T-cell (primary cell): ENCODE measurements at regions of chr2 and their contacts with region 1.

Region 1: GRCh38 chr2:200471324-200471848 is 38.5 kb downstream of the KCTD18 start:
- DNase-seq: peak in 19 of 35 experiments; percentile 8 to 67 (median 21)
- ATAC-seq: no peak
- H3K4me3 ChIP-seq: no peak overlapping the region
- H3K4me3 Mint-ChIP-seq: peak overlapping the region in 1 of 3 donors; percentile 3
- H3K27ac ChIP-seq: no peak overlapping the region
- H3K27ac Mint-ChIP-seq: peak overlapping the region in 1 of 2 donors; percentile 76
- H3K4me1 ChIP-seq: peaks cover 18 to 19% of the 10 kb centered on the region in 2 experiments
- H3K4me1 Mint-ChIP-seq: peaks cover 38 to 39% (median 38%) of the 10 kb centered on the region in 3 donors
- H3K27me3 ChIP-seq: no peaks in the 10 kb centered on the region
- H3K27me3 Mint-ChIP-seq: no peaks in the 10 kb centered on the region

Region 2: DNA sequence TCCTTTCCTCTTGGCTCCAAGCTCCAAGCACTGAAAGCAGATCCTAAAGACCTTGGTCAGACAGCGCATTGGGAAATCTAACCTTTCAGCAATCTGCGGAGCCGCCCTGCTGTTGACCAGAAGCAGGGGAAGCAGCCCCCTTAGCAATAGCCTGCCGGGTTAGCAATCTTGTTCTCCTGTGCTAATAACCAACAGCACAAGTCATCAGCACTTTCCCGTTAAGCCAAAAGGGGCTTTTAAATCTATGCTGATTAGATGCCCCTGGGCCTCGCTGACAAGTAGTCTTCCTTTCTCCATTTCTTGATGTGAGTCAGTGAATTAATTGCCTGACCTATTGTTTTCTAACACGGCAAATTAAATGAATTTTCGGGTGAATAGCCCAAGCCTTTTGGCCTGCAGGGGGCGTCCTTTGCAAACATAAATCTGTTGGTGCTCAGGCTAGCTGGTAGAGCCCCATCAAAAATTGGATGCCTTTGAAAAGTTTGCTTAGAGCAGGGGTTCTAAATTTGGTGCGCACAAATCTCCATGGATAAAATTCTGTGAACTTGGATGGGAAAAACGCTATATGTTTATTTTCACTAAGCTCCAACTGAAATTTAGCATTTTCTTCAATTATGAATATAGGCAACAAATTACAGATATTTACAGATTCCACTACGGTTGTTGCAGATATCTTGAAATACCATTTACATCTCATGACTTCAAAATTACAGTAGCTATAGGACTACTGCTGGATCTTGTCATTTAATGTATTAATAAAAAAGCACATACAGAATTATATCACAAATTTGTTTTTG is 491.4 kb before region 1 on chr2:
- CTCF ChIA-PET with region 1: interaction called, 11 to 12 read pairs
- POLR2A ChIA-PET with region 1: interaction called, 3 read pairs
- DNase-seq: peak; percentile 38 to 85 (median 76)
- ATAC-seq: peak; percentile 42 to 76 (median 60)
- H3K4me3 ChIP-seq: no peak overlapping the region
- H3K4me3 Mint-ChIP-seq: no peak overlapping the region
- H3K27ac ChIP-seq: no peak overlapping the region
- H3K27ac Mint-ChIP-seq: no peak overlapping the region
- H3K4me1 ChIP-seq: peaks cover 0 to 4% of the 10 kb centered on the region in 2 experiments
- H3K4me1 Mint-ChIP-seq: peaks cover 0 to 5% (median 4%) of the 10 kb centered on the region in 3 donors
- H3K27me3 ChIP-seq: peaks cover 0 to 5% of the 10 kb centered on the region in 2 experiments
- H3K27me3 Mint-ChIP-seq: no peaks in the 10 kb centered on the region

Region 3: DNA sequence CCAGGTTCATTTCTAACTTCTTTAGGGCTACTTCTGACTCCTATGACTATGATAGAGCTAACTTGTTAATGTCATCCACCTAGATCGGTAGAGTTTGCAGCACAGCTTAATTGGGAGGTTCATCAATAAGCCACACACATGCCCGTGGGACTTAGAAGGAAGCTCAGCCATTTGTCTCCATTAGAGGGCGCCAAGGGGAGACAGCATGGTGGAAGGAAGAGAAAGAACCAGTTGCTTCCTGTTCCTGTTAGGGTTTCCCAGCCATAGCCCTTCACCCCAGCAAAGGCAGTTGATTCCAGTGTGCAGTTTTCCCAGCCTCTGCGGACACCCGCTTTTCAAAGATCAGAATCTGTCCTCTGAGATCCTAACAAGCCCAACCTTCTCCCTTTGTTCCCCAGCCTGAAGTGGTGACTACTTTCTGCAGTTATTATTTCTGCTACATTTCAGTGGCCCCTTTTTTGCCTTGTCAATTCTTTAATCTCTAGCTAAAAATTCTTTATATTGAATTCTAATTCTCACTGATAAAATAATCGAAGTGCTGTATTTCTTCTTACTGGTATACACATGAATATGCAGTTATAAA is 485.7 kb before region 1 on chr2:
- CTCF ChIA-PET with region 1: interaction called, 11 to 12 read pairs
- POLR2A ChIA-PET with region 1: interaction called in 1 of 2 experiments, 3 read pairs
- DNase-seq: peak in 34 of 35 experiments; percentile 3 to 66 (median 33)
- ATAC-seq: peak in 3 of 4 experiments; percentile 59 to 65 (median 65)
- H3K4me3 ChIP-seq: no peak overlapping the region
- H3K4me3 Mint-ChIP-seq: no peak overlapping the region
- H3K27ac ChIP-seq: no peak overlapping the region
- H3K27ac Mint-ChIP-seq: no peak overlapping the region
- H3K4me1 ChIP-seq: peaks cover 3 to 13% of the 10 kb centered on the region in 2 experiments
- H3K4me1 Mint-ChIP-seq: peaks cover 0 to 6% (median 6%) of the 10 kb centered on the region in 3 donors
- H3K27me3 ChIP-seq: no peaks in the 10 kb centered on the region
- H3K27me3 Mint-ChIP-seq: no peaks in the 10 kb centered on the region